ENCODE measurements at regions of chr10 and their contacts with region 1.

Region 1: DNA sequence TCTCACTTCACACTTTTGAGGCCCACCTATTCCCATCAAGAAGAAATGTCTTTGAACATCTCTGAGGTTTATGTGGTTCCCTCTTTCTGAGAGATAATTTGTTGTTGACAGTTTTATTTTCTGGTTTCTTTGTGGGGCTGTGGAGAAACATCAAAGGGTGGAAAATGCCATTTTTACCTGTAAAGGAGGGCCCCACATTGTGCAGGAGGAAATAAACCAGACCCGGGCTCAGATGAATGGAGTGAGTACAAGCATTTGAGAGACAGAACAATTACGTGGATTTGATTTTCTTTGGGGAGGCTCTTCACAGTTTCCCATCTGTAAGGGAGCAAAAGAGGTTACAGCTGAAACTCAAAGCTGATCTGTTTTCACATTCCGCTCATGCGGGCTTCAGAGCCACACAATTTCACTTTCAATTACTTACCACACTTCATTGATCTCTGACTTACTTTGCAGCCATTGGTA is 29.8 kb downstream of the ITPRIP start:
- DNase-seq: peak in 7 of 9 donors; percentile 51 to 77 (median 71)
- ATAC-seq: peak; percentile 58
- H3K4me3 ChIP-seq: peak overlapping the region; percentile 19
- H3K4me3 Mint-ChIP-seq: peak overlapping the region; percentile 25 to 83 (median 75)
- H3K27ac ChIP-seq: no peak overlapping the region
- H3K27ac Mint-ChIP-seq: peak overlapping the region; percentile 79 to 94 (median 87)
- H3K4me1 ChIP-seq: peaks cover 39 to 43% of the 10 kb centered on the region in 2 donors
- H3K4me1 Mint-ChIP-seq: peaks cover 53 to 89% (median 75%) of the 10 kb centered on the region in 7 donors
- H3K27me3 ChIP-seq: no peaks in the 10 kb centered on the region
- H3K27me3 Mint-ChIP-seq: no peaks in the 10 kb centered on the region

Region 2: GRCh38 chr10:104291439-104291951 is 17.0 kb before region 1 on chr10:
- CTCF ChIA-PET with region 1: interaction called, 110 read pairs
- POLR2A ChIA-PET with region 1: interaction called, 10 read pairs
- intact Hi-C with region 1: loop called (anchors 1 kb)
- DNase-seq: peak; percentile 77 to 89 (median 86)
- ATAC-seq: peak; percentile 100
- H3K4me3 ChIP-seq: no peak overlapping the region
- H3K4me3 Mint-ChIP-seq: peak overlapping the region in 4 of 10 donors; percentile 0 to 64 (median 26)
- H3K27ac ChIP-seq: no peak overlapping the region
- H3K27ac Mint-ChIP-seq: peak overlapping the region in 5 of 9 donors; percentile 1 to 81 (median 20)
- H3K4me1 ChIP-seq: peaks cover 0 to 9% of the 10 kb centered on the region in 2 donors
- H3K4me1 Mint-ChIP-seq: peaks cover 2 to 11% (median 6%) of the 10 kb centered on the region in 7 donors
- H3K27me3 ChIP-seq: peaks cover 0 to 5% of the 10 kb centered on the region in 2 donors
- H3K27me3 Mint-ChIP-seq: peaks cover 3 to 45% (median 10%) of the 10 kb centered on the region in 5 donors

Region 3: DNA sequence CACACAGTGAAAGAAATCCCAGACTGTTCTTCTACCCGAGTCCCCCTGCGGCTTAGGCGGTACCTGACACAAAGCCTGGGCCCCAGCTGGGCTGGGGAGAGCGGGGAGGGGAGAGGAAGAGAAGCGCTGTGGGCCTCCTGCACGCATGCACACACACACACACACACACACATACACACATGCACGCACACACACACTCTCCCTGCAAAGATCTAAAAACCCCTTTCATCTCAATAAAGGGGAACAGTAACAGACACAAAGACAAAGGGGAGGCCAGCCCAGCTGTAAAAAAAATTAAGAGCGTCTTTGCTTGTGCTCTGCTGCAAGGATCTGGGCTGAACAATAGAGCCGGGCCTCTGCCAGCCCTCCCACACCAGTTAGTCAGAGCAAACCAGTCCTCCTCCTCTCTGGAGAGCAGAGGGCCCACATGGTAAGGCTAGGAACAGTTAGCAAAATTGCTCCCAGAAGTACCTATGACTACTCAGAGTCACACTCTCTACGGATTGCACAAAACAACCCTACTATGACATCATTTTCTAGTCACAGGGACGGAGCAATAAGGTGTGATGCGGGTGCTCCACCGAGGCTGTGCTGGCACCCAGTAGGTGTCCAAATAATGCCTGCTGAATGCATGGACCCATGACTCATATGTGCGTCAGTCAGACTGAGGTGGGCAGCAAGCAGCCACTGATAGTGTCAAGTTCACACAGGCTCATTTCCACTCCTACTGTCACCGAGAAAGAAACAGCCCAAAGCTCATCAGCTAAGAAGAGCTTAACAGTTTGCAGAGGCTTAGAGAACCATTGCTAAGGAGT is 20.6 kb after region 1 on chr10:
- CTCF ChIA-PET with region 1: interaction called, 58 read pairs
- POLR2A ChIA-PET with region 1: interaction called, 78 read pairs
- intact Hi-C with region 1: loop called (anchors 1 to 2 kb)
- DNase-seq: peak in 8 of 9 donors; percentile 71 to 95 (median 80)
- ATAC-seq: peak; percentile 64
- H3K4me3 ChIP-seq: peak overlapping the region; percentile 51
- H3K4me3 Mint-ChIP-seq: peak overlapping the region; percentile 76 to 93 (median 86)
- H3K27ac ChIP-seq: peak overlapping the region; percentile 78
- H3K27ac Mint-ChIP-seq: peak overlapping the region; percentile 87 to 97 (median 94)
- H3K4me1 ChIP-seq: peaks cover 64 to 97% of the 10 kb centered on the region in 2 donors
- H3K4me1 Mint-ChIP-seq: peaks cover 80 to 100% (median 99%) of the 10 kb centered on the region in 7 donors
- H3K27me3 ChIP-seq: no peaks in the 10 kb centered on the region
- H3K27me3 Mint-ChIP-seq: no peaks in the 10 kb centered on the region

Region 4: GRCh38 chr10:104345941-104346340 is 37.5 kb after region 1 on chr10:
- CTCF ChIA-PET with region 1: interaction called, 259 read pairs
- POLR2A ChIA-PET with region 1: interaction called, 11 read pairs
- intact Hi-C with region 1: loop called (anchors 1 kb)
- DNase-seq: no peak
- ATAC-seq: peak; percentile 46
- H3K4me3 ChIP-seq: no peak overlapping the region
- H3K4me3 Mint-ChIP-seq: peak overlapping the region in 6 of 10 donors; percentile 6 to 76 (median 29)
- H3K27ac ChIP-seq: no peak overlapping the region
- H3K27ac Mint-ChIP-seq: peak overlapping the region in 7 of 9 donors; percentile 26 to 90 (median 72)
- H3K4me1 ChIP-seq: peaks cover 5 to 11% of the 10 kb centered on the region in 2 donors
- H3K4me1 Mint-ChIP-seq: peaks cover 6 to 23% (median 18%) of the 10 kb centered on the region in 7 donors
- H3K27me3 ChIP-seq: no peaks in the 10 kb centered on the region
- H3K27me3 Mint-ChIP-seq: peaks cover 0 to 2% (median 0%) of the 10 kb centered on the region in 5 donors

Region 5: GRCh38 chr10:104434601-104435000 is 126.1 kb after region 1 on chr10:
- CTCF ChIA-PET with region 1: no interaction called
- POLR2A ChIA-PET with region 1: no interaction called
- intact Hi-C with region 1: no loop called
- DNase-seq: no peak
- ATAC-seq: no peak
- H3K4me3 ChIP-seq: no peak overlapping the region
- H3K4me3 Mint-ChIP-seq: no peak overlapping the region
- H3K27ac ChIP-seq: no peak overlapping the region
- H3K27ac Mint-ChIP-seq: no peak overlapping the region
- H3K4me1 ChIP-seq: no peaks in the 10 kb centered on the region
- H3K4me1 Mint-ChIP-seq: no peaks in the 10 kb centered on the region
- H3K27me3 ChIP-seq: no peaks in the 10 kb centered on the region
- H3K27me3 Mint-ChIP-seq: peaks cover 5 to 22% (median 17%) of the 10 kb centered on the region in 5 donors

Measured in naive thymus-derived CD4-positive, alpha-beta T cell (primary cell).